GM12878 (cell line): ENCODE measurements at regions of chrX and their contacts with region 1.

Region 1: GRCh38 chrX:76279000-76279399 is 106.1 kb downstream of the PBDC1 start:
- DNase-seq: peak; percentile 5
- ATAC-seq: peak; percentile 79
- H3K4me3 ChIP-seq: no peak overlapping the region
- H3K27ac ChIP-seq: no peak overlapping the region
- H3K4me1 ChIP-seq: no peaks in the 10 kb centered on the region
- H3K27me3 ChIP-seq: no peaks in the 10 kb centered on the region
- CTCF ChIP-seq: peak; percentile 61 to 79 (median 74)
- EP300 ChIP-seq: no peak
- POLR2A ChIP-seq: no peak
- RAD21 ChIP-seq: peak; percentile 94

Region 2: GRCh38 chrX:76366972-76367371 is 88.0 kb after region 1 on chrX:
- CTCF ChIA-PET with region 1: no interaction called
- POLR2A ChIA-PET with region 1: no interaction called
- RAD21 ChIA-PET with region 1: no interaction called
- SMC1A ChIA-PET with region 1: no interaction called
- in situ Hi-C with region 1: no loop called
- intact Hi-C with region 1: no loop called
- DNase-seq: no peak
- ATAC-seq: no peak
- H3K4me3 ChIP-seq: no peak overlapping the region
- H3K27ac ChIP-seq: no peak overlapping the region
- H3K4me1 ChIP-seq: no peaks in the 10 kb centered on the region
- H3K27me3 ChIP-seq: no peaks in the 10 kb centered on the region
- CTCF ChIP-seq: no peak
- EP300 ChIP-seq: no peak
- POLR2A ChIP-seq: no peak
- RAD21 ChIP-seq: no peak

Region 3: GRCh38 chrX:76454456-76454927 is 175.5 kb after region 1 on chrX:
- CTCF ChIA-PET with region 1: interaction called, 57 read pairs
- POLR2A ChIA-PET with region 1: no interaction called
- RAD21 ChIA-PET with region 1: interaction called, 20 read pairs
- SMC1A ChIA-PET with region 1: interaction called, 15 read pairs
- in situ Hi-C with region 1: loop called (anchors 10 kb)
- intact Hi-C with region 1: loop called (anchors 1 kb)
- DNase-seq: no peak
- ATAC-seq: peak; percentile 67
- H3K4me3 ChIP-seq: no peak overlapping the region
- H3K27ac ChIP-seq: no peak overlapping the region
- H3K4me1 ChIP-seq: no peaks in the 10 kb centered on the region
- H3K27me3 ChIP-seq: no peaks in the 10 kb centered on the region
- CTCF ChIP-seq: peak; percentile 52 to 59 (median 53); a peak in 5 of 6 replicates
- EP300 ChIP-seq: no peak
- POLR2A ChIP-seq: no peak
- RAD21 ChIP-seq: peak; percentile 66

Region 4: DNA sequence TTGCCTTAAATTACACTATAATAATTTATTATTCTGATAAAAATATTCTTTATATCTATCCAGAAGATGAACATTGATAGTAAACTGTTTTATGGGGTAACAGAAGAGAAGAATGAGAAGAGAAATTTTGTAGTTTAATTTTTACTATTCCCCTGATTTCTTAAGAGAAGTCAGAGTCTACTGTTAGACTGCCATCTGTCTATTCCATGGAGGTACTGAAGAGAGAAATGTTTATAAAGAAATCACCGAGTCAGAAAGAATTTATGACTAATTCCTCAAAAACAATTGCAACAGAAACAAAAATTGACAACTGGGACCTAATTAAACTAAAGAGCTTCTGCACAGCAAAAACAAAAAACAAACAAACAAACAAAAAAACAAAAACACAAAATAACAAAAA is 1318.1 kb after region 1 on chrX:
- CTCF ChIA-PET with region 1: interaction called, 5 read pairs
- POLR2A ChIA-PET with region 1: no interaction called
- RAD21 ChIA-PET with region 1: no interaction called
- SMC1A ChIA-PET with region 1: no interaction called
- in situ Hi-C with region 1: loop called (anchors 25 kb)
- intact Hi-C with region 1: no loop called
- DNase-seq: no peak
- ATAC-seq: peak; percentile 58
- H3K4me3 ChIP-seq: no peak overlapping the region
- H3K27ac ChIP-seq: no peak overlapping the region
- H3K4me1 ChIP-seq: no peaks in the 10 kb centered on the region
- H3K27me3 ChIP-seq: no peaks in the 10 kb centered on the region
- CTCF ChIP-seq: no peak; a peak in 1 of 6 replicates
- EP300 ChIP-seq: no peak
- POLR2A ChIP-seq: no peak
- RAD21 ChIP-seq: peak; percentile 22; the same call in 1 of the 2 replicates